ENCODE measurements at regions of chr15 and their contacts with region 1.

Region 1: GRCh38 chr15:51971375-51972133 is at the start of gene LEO1:
- DNase-seq: peak; percentile 90 to 91
- H3K4me3 ChIP-seq: peak within 1 kb of the TSS; percentile 59 to 68 (median 67)
- H3K27ac ChIP-seq: peak within 1 kb of the TSS; percentile 77 to 92 (median 84)
- H3K4me1 ChIP-seq: peaks cover 9 to 12% of the 10 kb centered on the region in 2 donors
- H3K27me3 ChIP-seq: no peaks in the 10 kb centered on the region
- CTCF ChIP-seq: peak in 4 of 6 experiments; percentile 36 to 50 (median 42)
- POLR2A ChIP-seq: peak in 1 of 2 donors; percentile 58
- total RNA-seq, gene LEO1: 13.2 to 26.9 (median 19.5) TPM

Region 2: DNA sequence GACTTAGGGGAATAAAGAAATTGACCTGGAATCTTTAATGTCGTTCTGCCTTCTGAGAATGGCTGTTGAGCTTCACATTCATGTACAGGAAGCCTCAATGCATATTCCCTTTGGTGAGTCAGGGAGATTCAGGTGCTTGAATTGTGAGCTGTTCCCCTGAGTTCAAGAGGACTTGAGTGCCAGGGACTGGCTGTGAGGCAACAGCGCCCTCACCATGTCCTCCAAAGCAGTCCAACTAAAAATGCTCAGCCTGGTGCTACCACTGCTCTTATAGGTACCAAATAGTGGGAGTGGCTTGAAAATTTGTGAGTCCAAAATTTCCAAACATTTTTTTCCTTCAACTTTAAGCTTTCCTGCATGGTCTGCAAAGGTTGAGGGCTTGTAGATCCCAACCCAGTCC is 54.1 kb before region 1 on chr15:
- intact Hi-C with region 1: loop called (anchors 2 kb)
- DNase-seq: peak; percentile 15 to 33
- H3K4me3 ChIP-seq: no peak overlapping the region
- H3K27ac ChIP-seq: no peak overlapping the region
- H3K4me1 ChIP-seq: no peaks in the 10 kb centered on the region
- H3K27me3 ChIP-seq: no peaks in the 10 kb centered on the region
- CTCF ChIP-seq: peak in 2 of 6 experiments; percentile 19 to 32
- POLR2A ChIP-seq: no peak

Region 3: GRCh38 chr15:52039925-52040781 is 68.6 kb after region 1 on chr15:
- intact Hi-C with region 1: loop called (anchors 10 kb)
- DNase-seq: peak; percentile 70 to 71
- H3K4me3 ChIP-seq: no peak overlapping the region
- H3K27ac ChIP-seq: peak overlapping the region; percentile 39 to 71 (median 42)
- H3K4me1 ChIP-seq: peaks cover 50 to 73% of the 10 kb centered on the region in 2 donors
- H3K27me3 ChIP-seq: no peaks in the 10 kb centered on the region
- CTCF ChIP-seq: no peak
- POLR2A ChIP-seq: no peak